Dorsolateral prefrontal cortex (tissue), 120 donors: ENCODE measurements at regions of chr22 and their contacts with region 1.

Region 1: DNA sequence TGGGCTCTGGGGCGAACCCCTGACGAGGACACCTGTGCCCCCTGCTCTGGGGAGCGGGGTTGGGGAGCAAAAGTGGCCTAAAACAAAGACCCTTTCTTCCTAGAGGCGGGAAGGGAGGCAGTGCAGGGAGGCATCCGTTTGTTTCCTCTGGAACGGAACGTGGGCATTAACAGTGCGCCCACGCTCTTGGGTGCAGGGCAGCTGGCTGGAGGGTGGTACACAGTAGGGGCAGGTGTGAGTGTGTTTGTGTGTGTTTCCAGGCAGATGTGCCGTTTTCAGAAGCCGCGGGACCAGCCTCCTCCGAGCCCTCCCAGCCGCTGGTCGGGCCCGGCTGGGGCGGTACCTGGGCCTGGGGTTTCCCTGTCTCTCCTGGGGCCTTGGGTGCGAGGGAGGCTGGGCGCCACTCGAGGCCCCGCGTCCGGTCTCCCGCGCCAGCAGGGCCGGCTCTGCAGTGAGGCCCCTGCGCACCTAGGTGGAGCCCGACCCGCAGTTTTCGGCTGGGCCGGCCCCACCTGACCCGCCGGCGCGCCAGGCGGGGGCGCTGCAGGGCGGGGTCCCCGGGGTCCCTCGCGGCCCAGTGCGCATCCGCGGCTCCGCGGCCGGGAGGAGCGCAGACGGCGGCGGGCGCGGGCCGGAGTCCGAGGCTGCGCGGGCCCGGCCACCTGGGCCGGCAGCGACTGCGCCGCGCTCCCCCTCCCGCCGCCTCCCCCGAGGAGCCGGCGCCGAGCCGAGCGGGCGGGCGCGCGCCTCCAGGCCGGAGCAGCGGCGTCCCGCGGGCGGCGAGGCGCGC is 1252.7 kb downstream of the BRD1 start:
- DNase-seq: peak in 7 of 10 donors; percentile 31 to 83 (median 68)
- H3K4me3 ChIP-seq: peak overlapping the region in 23 of 59 donors; percentile 2 to 74 (median 33)
- H3K27ac ChIP-seq: peak overlapping the region in 51 of 59 donors; percentile 2 to 86 (median 65)
- H3K27me3 ChIP-seq: peaks cover 0 to 3% (median 0%) of the 10 kb centered on the region in 45 donors
- CTCF ChIP-seq: peak in 55 of 56 donors; percentile 21 to 84 (median 59)

Region 2: GRCh38 chr22:48624401-48624800 is 49.4 kb after region 1 on chr22:
- intact Hi-C with region 1: loop called in 1 of 2 experiments (anchors 2 kb)
- DNase-seq: no peak
- H3K4me3 ChIP-seq: no peak overlapping the region
- H3K27ac ChIP-seq: peak overlapping the region in 4 of 59 donors; percentile 1 to 99 (median 23)
- H3K27me3 ChIP-seq: no peaks in the 10 kb centered on the region
- CTCF ChIP-seq: no peak

Region 3: GRCh38 chr22:48702573-48703264 is 127.7 kb after region 1 on chr22:
- intact Hi-C with region 1: loop called (anchors 1 to 5 kb)
- DNase-seq: peak in 9 of 10 donors; percentile 72 to 91 (median 88)
- H3K4me3 ChIP-seq: peak overlapping the region in 1 of 59 donors; percentile 23
- H3K27ac ChIP-seq: peak overlapping the region; percentile 24 to 94 (median 85)
- H3K27me3 ChIP-seq: no peaks in the 10 kb centered on the region
- CTCF ChIP-seq: peak in 24 of 56 donors; percentile 5 to 50 (median 34)

Region 4: GRCh38 chr22:48919187-48919590 is 344.2 kb after region 1 on chr22:
- intact Hi-C with region 1: loop called (anchors 5 to 10 kb)
- DNase-seq: peak in 1 of 10 donors; percentile 14
- H3K4me3 ChIP-seq: peak overlapping the region in 8 of 59 donors; percentile 1 to 32 (median 12)
- H3K27ac ChIP-seq: peak overlapping the region in 58 of 59 donors; percentile 77 to 100 (median 97)
- H3K27me3 ChIP-seq: peaks cover 0 to 19% (median 0%) of the 10 kb centered on the region in 45 donors
- CTCF ChIP-seq: peak in 1 of 56 donors; percentile 4

Region 5: GRCh38 chr22:49026494-49027380 is 451.8 kb after region 1 on chr22:
- intact Hi-C with region 1: loop called in 1 of 2 experiments (anchors 2 kb)
- DNase-seq: peak in 8 of 10 donors; percentile 39 to 74 (median 58)
- H3K4me3 ChIP-seq: no peak overlapping the region
- H3K27ac ChIP-seq: no peak overlapping the region
- H3K27me3 ChIP-seq: peaks cover 0 to 30% (median 0%) of the 10 kb centered on the region in 45 donors
- CTCF ChIP-seq: peak in 53 of 56 donors; percentile 24 to 73 (median 53)

Region 6: DNA sequence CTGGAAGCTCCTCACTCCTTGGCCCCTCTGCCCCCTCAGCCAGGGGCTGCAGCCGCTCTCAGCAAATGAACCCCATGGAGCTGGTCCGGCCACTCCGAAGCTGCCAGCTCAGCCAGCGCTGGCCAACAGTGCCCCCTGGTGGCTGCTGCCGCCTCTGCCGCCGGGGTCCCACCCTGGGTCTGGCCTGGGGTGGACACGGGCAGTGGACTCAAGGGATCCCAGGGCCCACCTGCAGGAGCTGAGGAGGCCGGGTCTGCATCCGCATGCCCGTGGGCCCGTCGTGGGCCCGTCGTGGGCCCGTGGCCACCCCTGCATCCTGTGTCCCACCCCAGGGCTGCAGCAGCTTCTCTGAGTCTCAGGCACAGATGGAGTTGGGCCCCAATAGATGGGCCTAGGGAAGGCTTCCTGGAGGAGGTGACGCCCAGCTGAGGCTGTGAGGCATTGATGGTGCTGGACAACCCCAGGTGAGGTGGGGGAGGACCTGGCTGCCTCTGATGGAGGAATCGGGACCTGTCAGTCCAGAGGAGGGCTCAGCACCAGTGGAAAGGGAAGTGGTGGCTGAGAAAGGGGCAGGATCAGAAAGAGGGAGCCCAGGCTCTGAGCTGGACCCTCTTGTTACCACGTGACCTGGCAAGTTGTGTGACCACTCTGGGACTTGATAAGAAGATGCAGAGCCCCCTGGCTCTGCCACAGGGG is 730.4 kb after region 1 on chr22:
- intact Hi-C with region 1: loop called (anchors 1 to 2 kb)
- DNase-seq: peak; percentile 57 to 90 (median 76)
- H3K4me3 ChIP-seq: peak overlapping the region in 49 of 59 donors; percentile 7 to 61 (median 38)
- H3K27ac ChIP-seq: no peak overlapping the region
- H3K27me3 ChIP-seq: peaks cover 0 to 18% (median 0%) of the 10 kb centered on the region in 45 donors
- CTCF ChIP-seq: peak; percentile 85 to 100 (median 98)